Heart left ventricle (tissue), 16 donors: ENCODE measurements at regions of chr12 and their contacts with region 1.

Region 1: GRCh38 chr12:56224102-56224701 is at the start of gene NABP2:
- DNase-seq: peak; percentile 98 to 99 (median 99)
- ATAC-seq: peak; percentile 80 to 90 (median 85)
- H3K4me3 ChIP-seq: peak within 1 kb of the TSS; percentile 52 to 97 (median 66)
- H3K27ac ChIP-seq: peak within 1 kb of the TSS; percentile 19 to 98 (median 92)
- H3K4me1 ChIP-seq: peaks cover 8 to 46% (median 37%) of the 10 kb centered on the region in 12 donors
- H3K27me3 ChIP-seq: no peaks in the 10 kb centered on the region
- CTCF ChIP-seq: peak; percentile 66 to 98 (median 91)
- POLR2A ChIP-seq: peak in 1 of 2 donors; percentile 55
- total RNA-seq, gene NABP2: 18.0 to 27.4 (median 20.7) TPM

Region 2: DNA sequence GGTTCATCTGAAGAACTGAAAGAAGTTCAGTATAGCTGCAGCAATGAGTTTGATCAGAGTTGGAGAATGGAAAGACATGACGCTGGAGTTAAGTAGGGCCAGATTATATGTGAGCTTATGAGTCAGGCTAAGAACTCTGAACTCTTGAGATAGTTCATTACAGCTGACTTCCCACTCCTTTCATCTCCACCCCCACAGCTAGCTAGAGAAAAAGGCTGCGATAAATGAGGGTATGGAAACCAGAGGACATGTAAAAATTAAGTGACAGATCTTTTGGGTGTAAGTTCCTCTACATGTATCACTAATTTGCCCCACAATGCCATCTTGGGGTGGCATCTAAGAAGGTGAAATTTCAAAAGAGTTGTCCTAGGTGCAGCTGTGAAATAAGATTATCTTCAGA is 325.1 kb before region 1 on chr12:
- intact Hi-C with region 1: no loop called
- DNase-seq: no peak
- ATAC-seq: no peak
- H3K4me3 ChIP-seq: no peak overlapping the region
- H3K27ac ChIP-seq: no peak overlapping the region
- H3K4me1 ChIP-seq: no peaks in the 10 kb centered on the region
- H3K27me3 ChIP-seq: no peaks in the 10 kb centered on the region
- CTCF ChIP-seq: no peak
- POLR2A ChIP-seq: no peak

Region 3: DNA sequence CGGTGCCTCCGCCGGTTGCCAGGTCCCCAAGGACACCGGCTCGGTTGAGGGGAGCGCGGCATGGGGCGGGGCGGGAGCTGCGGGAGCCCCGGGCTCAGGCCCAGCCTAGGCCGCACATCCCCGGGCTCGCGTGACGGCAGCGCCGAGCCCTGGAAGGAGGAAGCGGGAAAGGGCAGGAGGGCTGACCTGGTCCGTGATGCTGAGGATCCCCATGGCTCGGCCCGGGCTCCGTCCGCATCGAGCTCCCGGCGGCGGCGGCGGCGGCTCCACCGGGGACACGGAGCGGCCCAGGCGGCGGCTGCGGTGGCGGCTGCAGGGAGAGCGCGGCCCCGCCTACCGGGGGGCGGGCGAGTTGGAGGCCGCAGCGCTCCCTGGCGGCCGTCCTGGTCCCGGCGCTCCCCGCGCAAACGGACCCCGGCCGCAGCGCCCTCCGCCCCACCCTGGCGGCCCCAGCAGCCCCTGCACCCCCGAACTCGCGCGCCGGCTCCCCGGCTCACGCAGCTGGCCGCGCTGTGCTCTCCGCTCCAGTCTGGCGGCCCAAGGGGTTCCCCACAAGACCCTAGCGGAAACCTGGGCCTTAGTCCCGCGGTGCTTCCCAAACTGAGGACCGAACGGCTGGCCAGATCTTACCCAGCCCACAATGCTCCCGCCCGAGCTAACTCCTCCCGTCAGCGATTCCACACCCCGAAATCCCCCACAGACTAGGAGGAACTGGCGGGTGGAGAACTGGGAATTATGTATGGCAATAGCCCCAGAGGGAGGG is 34.0 kb after region 1 on chr12 and contains the start of gene ANKRD52:
- intact Hi-C with region 1: loop called in 6 of 10 experiments (anchors 2 to 5 kb)
- DNase-seq: peak; percentile 76 to 90 (median 83)
- ATAC-seq: peak; percentile 65 to 97 (median 93)
- H3K4me3 ChIP-seq: peak within 1 kb of the TSS; percentile 60 to 99 (median 96)
- H3K27ac ChIP-seq: peak within 1 kb of the TSS; percentile 51 to 97 (median 90)
- H3K4me1 ChIP-seq: peaks cover 5 to 29% (median 23%) of the 10 kb centered on the region in 12 donors
- H3K27me3 ChIP-seq: no peaks in the 10 kb centered on the region
- CTCF ChIP-seq: peak in 11 of 12 donors; percentile 43 to 94 (median 83)
- POLR2A ChIP-seq: peak in 1 of 2 donors; percentile 35
- total RNA-seq, gene ANKRD52: 19.3 to 40.6 (median 28.0) TPM

Region 4: GRCh38 chr12:56286044-56286830 is 62.0 kb after region 1 on chr12:
- intact Hi-C with region 1: no loop called
- DNase-seq: no peak
- ATAC-seq: peak in 1 of 4 donors; percentile 33
- H3K4me3 ChIP-seq: no peak overlapping the region
- H3K27ac ChIP-seq: peak overlapping the region in 6 of 12 donors; percentile 6 to 32 (median 17)
- H3K4me1 ChIP-seq: peaks cover 7 to 29% (median 17%) of the 10 kb centered on the region in 12 donors
- H3K27me3 ChIP-seq: no peaks in the 10 kb centered on the region
- CTCF ChIP-seq: no peak
- POLR2A ChIP-seq: no peak